Heart right ventricle (tissue), 16 donors: ENCODE measurements at regions of chr20 and their contacts with region 1.

Region 1: GRCh38 chr20:35092524-35093266 is at the start of gene TRPC4AP:
- DNase-seq: peak; percentile 88 to 92
- ATAC-seq: peak; percentile 93 to 97 (median 96)
- H3K4me3 ChIP-seq: peak within 1 kb of the TSS; percentile 62 to 96 (median 88)
- H3K27ac ChIP-seq: peak within 1 kb of the TSS; percentile 84 to 97 (median 94)
- H3K4me1 ChIP-seq: peaks cover 9 to 62% (median 31%) of the 10 kb centered on the region in 9 donors
- H3K27me3 ChIP-seq: no peaks in the 10 kb centered on the region
- CTCF ChIP-seq: peak; percentile 95 to 99 (median 98)
- total RNA-seq, gene TRPC4AP: 32.2 to 46.4 (median 38.5) TPM

Region 2: GRCh38 chr20:34876162-34877001 is 216.3 kb before region 1 on chr20 and contains the start of gene ACSS2:
- intact Hi-C with region 1: loop called in 4 of 10 experiments (anchors 5 to 10 kb)
- DNase-seq: peak; percentile 99 to 100
- ATAC-seq: peak; percentile 89 to 95 (median 92)
- H3K4me3 ChIP-seq: peak within 1 kb of the TSS; percentile 52 to 94 (median 76)
- H3K27ac ChIP-seq: peak within 1 kb of the TSS; percentile 49 to 91 (median 89)
- H3K4me1 ChIP-seq: peaks cover 8 to 57% (median 48%) of the 10 kb centered on the region in 9 donors
- H3K27me3 ChIP-seq: peaks cover 0 to 4% (median 0%) of the 10 kb centered on the region in 7 donors
- CTCF ChIP-seq: peak in 1 of 9 donors; percentile 9
- total RNA-seq, gene ACSS2: 90.2 to 125 (median 104) TPM

Region 3: DNA sequence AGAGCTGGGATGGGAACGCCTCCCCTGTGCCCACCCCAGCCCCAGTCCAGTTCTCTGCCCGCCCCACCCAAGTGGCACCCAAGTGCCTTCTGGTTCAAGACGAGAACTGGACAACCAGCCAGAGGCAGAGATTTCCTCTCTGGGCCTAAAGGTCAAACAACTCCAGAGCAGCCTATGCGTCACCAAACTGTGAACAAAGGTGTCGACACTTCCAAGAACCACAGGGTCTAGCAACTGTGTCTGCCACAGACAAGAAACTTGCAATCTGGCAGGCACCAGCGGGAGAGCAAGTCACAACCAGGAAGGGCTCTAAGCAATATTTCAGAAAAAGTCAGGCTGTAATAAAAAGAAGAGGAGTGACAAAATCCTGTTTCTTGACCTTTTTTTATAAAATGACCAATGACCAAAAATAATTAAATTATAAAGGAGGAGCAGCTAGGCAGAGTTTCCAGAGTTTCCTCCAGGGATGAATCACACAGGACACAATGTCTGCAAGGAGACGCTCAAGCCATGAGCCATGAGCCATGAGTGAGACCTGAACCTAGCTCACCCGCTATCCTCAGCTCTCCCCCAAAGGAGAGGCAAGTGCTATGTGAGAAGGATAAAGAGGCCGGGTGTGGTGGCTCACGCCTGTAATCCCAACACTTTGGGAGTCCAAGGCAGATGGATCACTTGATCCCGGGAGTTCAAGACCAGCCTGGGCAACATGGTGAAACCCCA is 43.3 kb after region 1 on chr20:
- intact Hi-C with region 1: loop called in 1 of 10 experiments (anchors 2 kb)
- DNase-seq: peak; percentile 29 to 51
- ATAC-seq: peak in 7 of 8 donors; percentile 56 to 88 (median 80)
- H3K4me3 ChIP-seq: no peak overlapping the region
- H3K27ac ChIP-seq: peak overlapping the region; percentile 14 to 86 (median 70)
- H3K4me1 ChIP-seq: peaks cover 12 to 34% (median 29%) of the 10 kb centered on the region in 9 donors
- H3K27me3 ChIP-seq: no peaks in the 10 kb centered on the region
- CTCF ChIP-seq: no peak

Region 4: GRCh38 chr20:35207950-35208611 is 115.4 kb after region 1 on chr20:
- intact Hi-C with region 1: loop called in 7 of 10 experiments (anchors 1 to 5 kb)
- DNase-seq: peak; percentile 66 to 90
- ATAC-seq: peak; percentile 91 to 98 (median 96)
- H3K4me3 ChIP-seq: peak overlapping the region in 7 of 10 donors; percentile 1 to 32 (median 24)
- H3K27ac ChIP-seq: peak overlapping the region; percentile 36 to 82 (median 60)
- H3K4me1 ChIP-seq: peaks cover 0 to 13% (median 5%) of the 10 kb centered on the region in 9 donors
- H3K27me3 ChIP-seq: no peaks in the 10 kb centered on the region
- CTCF ChIP-seq: peak; percentile 77 to 89 (median 82)